ENCODE measurements at regions of chr22 and their contacts with region 1.

Region 1: GRCh38 chr22:30262917-30263741 is 3.5 kb downstream of the OSM start:
- DNase-seq: peak; percentile 80 to 90
- H3K4me3 ChIP-seq: peak overlapping the region; percentile 17 to 35 (median 22)
- H3K27ac ChIP-seq: peak overlapping the region in 2 of 5 donors; percentile 6 to 65
- H3K4me1 ChIP-seq: peaks cover 6 to 30% (median 9%) of the 10 kb centered on the region in 4 donors
- H3K27me3 ChIP-seq: no peaks in the 10 kb centered on the region
- CTCF ChIP-seq: peak in 5 of 7 experiments; percentile 93 to 100 (median 98)
- EP300 ChIP-seq: no peak
- POLR2A ChIP-seq: no peak

Region 2: DNA sequence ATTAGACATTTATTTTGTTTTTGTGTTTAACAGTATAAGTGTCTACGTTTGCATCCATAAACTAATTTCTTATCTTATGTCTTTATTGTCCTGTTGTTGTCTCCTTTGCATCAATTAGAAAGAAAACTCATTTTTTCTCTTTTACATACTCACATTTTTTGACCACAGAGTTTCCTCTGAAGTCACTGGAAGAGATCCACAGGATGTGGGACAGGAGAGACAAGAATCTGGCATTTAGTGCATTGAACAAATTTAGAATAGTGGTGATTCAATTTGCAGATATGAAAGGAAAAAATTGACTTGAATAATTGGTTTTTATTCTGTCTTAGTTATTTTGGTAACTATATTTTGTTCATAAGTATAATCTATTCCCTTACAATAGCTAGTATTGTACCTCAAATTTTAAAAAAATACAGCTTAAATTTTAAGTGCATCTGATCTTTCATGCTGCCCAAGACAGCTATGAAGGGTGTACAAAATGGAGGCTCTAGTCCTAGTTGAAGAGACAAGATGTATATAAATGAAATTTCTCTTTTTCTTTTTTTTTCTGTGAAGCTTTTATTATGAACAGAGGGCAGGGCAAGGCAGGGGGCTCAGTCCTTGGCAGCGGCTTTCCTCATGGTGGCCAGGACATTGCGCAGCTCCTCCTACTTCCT is 158.5 kb before region 1 on chr22:
- intact Hi-C with region 1: loop called (anchors 5 kb)
- DNase-seq: no peak
- H3K4me3 ChIP-seq: no peak overlapping the region
- H3K27ac ChIP-seq: no peak overlapping the region
- H3K4me1 ChIP-seq: no peaks in the 10 kb centered on the region
- H3K27me3 ChIP-seq: no peaks in the 10 kb centered on the region
- CTCF ChIP-seq: no peak
- EP300 ChIP-seq: no peak
- POLR2A ChIP-seq: no peak

Region 3: DNA sequence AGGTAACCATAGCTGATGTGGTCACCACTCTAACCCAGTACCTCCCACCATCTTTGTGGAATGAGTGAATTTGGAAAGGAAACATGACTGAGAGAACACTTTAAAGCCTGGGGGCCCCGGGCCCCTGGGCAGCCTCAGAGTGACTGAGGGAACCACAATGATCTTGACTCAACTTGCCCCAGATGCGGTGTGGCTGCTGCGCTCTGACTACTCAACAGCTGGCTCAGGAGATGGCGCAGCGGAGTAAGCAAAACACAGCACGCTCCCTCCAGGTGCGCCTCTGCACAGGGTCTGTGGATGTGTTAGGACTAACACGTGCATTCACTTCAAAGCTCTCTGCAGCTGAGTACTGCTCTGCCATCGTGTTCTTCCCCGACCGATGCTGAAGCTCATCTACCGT is 118.1 kb after region 1 on chr22:
- intact Hi-C with region 1: loop called (anchors 5 kb)
- DNase-seq: no peak
- H3K4me3 ChIP-seq: no peak overlapping the region
- H3K27ac ChIP-seq: no peak overlapping the region
- H3K4me1 ChIP-seq: peaks cover 3 to 6% (median 5%) of the 10 kb centered on the region in 4 donors
- H3K27me3 ChIP-seq: no peaks in the 10 kb centered on the region
- CTCF ChIP-seq: no peak
- EP300 ChIP-seq: no peak
- POLR2A ChIP-seq: no peak

Measured in stomach (tissue), 19 donors.